ENCODE measurements at regions of chr18 and their contacts with region 1.

Region 1: GRCh38 chr18:59402432-59403090 is 43.5 kb upstream of the LMAN1 start:
- H3K4me3 Mint-ChIP-seq: no peak overlapping the region
- H3K27ac Mint-ChIP-seq: no peak overlapping the region
- H3K4me1 Mint-ChIP-seq: no peaks in the 10 kb centered on the region
- H3K27me3 Mint-ChIP-seq: peaks cover 3% of the 10 kb centered on the region

Region 2: DNA sequence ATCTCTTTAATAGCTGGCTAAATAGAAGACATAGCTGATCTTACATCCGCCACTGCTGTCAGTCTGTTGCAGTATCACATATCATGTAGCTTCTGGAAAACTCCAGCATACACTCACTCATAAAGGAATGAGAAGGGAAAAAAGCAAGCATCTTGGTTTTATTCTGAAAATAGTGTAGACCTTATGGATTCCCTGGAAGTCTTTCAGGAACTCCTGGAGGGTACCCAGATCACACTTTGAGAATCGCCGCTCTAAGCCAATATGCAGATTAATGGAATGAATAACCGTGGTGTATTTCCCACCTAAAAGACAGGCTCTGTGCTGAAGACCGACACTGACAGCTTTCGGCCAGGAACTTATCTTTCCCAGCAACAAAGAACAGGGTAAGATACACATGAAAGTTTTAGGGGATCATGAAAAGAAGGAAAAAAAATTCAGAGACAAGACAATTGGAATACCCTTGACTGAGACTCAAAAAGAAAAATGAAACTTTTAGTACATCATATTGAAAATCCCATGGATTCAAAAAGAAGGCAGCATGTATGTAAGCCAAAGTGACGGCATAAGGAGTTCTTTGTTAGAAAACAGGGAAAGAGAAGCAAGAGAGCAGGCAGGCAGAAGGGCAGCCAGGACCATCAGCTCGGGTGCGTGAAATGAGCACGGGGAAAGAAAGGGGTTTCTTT is 319.3 kb before region 1 on chr18:
- intact Hi-C with region 1: loop called (anchors 5 kb)
- H3K4me3 Mint-ChIP-seq: no peak overlapping the region
- H3K27ac Mint-ChIP-seq: no peak overlapping the region
- H3K4me1 Mint-ChIP-seq: peaks cover 5% of the 10 kb centered on the region
- H3K27me3 Mint-ChIP-seq: peaks cover 21% of the 10 kb centered on the region

Region 3: DNA sequence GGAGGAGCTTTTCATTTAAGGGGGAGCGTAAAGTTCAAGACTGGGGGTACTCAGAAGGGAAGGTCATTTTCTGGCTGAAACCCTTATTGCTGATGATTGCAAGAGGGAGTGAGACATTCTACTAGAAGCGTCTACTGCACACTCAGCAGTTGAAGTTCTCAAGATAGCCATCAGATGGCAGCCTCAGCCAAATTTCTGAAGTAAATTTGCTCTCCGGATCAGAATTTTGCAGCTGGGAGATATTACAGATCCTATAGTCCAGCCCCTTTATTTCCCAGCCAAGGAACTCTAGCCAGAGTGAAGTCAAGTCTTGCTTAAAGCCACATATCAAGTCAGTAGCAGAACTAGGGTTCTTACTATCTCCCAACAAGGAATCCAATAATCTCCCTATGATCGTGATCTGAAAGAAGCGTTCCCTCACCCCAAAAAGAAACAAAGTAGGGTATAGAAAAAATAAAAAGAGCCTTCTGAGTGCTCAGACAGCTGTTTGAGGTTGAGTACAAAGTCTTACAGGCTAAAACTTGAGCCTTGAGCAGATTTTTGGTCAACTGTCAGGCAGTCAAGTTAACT is 153.3 kb before region 1 on chr18:
- intact Hi-C with region 1: loop called (anchors 2 kb)
- H3K4me3 Mint-ChIP-seq: no peak overlapping the region
- H3K27ac Mint-ChIP-seq: no peak overlapping the region
- H3K4me1 Mint-ChIP-seq: no peaks in the 10 kb centered on the region
- H3K27me3 Mint-ChIP-seq: peaks cover 29% of the 10 kb centered on the region

Region 4: DNA sequence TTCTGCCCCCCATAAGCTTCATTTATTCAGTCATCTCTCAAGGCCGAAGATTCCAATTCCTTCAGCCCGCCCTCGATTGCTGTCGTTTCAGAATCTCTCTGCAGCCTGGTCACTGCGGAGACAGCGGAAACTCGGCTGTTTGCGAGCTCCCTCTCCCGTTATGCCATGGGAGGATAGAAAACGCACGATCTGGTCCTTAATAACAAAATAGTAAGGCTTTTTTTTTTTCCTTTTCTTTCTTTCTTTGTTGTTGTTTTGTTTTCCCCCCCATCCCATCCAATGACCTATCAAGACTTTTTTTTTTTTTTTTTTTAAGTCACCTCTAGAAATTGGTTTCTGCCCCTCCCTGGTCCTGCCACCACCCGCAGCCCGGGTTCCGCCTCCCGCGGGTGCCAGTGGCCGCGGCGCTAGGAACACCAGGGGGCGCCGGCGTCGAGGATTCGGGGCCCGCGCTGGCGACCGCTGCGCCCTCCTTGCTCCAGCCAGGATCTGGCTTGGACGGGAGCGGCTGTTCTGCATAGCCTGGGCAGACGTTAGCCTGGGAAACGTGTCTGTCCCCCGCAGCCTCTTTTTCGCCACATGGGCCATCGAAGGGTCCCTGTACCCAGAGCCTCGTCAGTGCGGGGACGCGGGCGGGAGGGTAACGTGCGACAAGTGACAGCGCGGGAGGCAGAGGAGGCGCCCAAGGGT is 94.2 kb before region 1 on chr18:
- intact Hi-C with region 1: loop called (anchors 2 kb)
- H3K4me3 Mint-ChIP-seq: peak overlapping the region; percentile 56
- H3K27ac Mint-ChIP-seq: no peak overlapping the region
- H3K4me1 Mint-ChIP-seq: no peaks in the 10 kb centered on the region
- H3K27me3 Mint-ChIP-seq: peaks cover 34% of the 10 kb centered on the region